ENCODE measurements at regions of chr1 and their contacts with region 1.

Region 1: GRCh38 chr1:205335643-205336091 is 14.1 kb upstream of the NUAK2 start:
- DNase-seq: no peak
- H3K4me3 ChIP-seq: no peak overlapping the region
- H3K27ac ChIP-seq: no peak overlapping the region
- H3K4me1 ChIP-seq: peaks cover 0 to 5% (median 0%) of the 10 kb centered on the region in 3 donors
- H3K27me3 ChIP-seq: peaks cover 0 to 41% (median 0%) of the 10 kb centered on the region in 4 donors
- CTCF ChIP-seq: peak; percentile 87 to 98 (median 94)
- POLR2A ChIP-seq: no peak

Region 2: GRCh38 chr1:205061665-205062069 is 274.0 kb before region 1 on chr1:
- intact Hi-C with region 1: no loop called
- DNase-seq: no peak
- H3K4me3 ChIP-seq: no peak overlapping the region
- H3K27ac ChIP-seq: no peak overlapping the region
- H3K4me1 ChIP-seq: peaks cover 0 to 7% (median 4%) of the 10 kb centered on the region in 3 donors
- H3K27me3 ChIP-seq: peaks cover 0 to 22% (median 0%) of the 10 kb centered on the region in 4 donors
- CTCF ChIP-seq: peak; percentile 56 to 86 (median 78)
- POLR2A ChIP-seq: no peak

Region 3: GRCh38 chr1:205493241-205494085 is 157.8 kb after region 1 on chr1:
- intact Hi-C with region 1: loop called (anchors 10 kb)
- DNase-seq: no peak
- H3K4me3 ChIP-seq: no peak overlapping the region
- H3K27ac ChIP-seq: peak overlapping the region in 1 of 4 donors; percentile 42
- H3K4me1 ChIP-seq: peaks cover 11 to 29% (median 23%) of the 10 kb centered on the region in 3 donors
- H3K27me3 ChIP-seq: peaks cover 0 to 70% (median 0%) of the 10 kb centered on the region in 4 donors
- CTCF ChIP-seq: no peak
- POLR2A ChIP-seq: no peak

Measured in esophagus squamous epithelium (tissue), 5 donors.